ENCODE measurements at regions of chr2 and their contacts with region 1.

Region 1: GRCh38 chr2:71073475-71073874 is 5.0 kb downstream of the NAGK start:
- DNase-seq: no peak
- H3K4me3 ChIP-seq: no peak overlapping the region
- H3K27ac ChIP-seq: no peak overlapping the region
- H3K4me1 ChIP-seq: peaks cover 16% of the 10 kb centered on the region
- H3K27me3 ChIP-seq: no peaks in the 10 kb centered on the region
- CTCF ChIP-seq: no peak

Region 2: GRCh38 chr2:70509553-70509952 is 563.9 kb before region 1 on chr2:
- CTCF ChIA-PET with region 1: no interaction called
- POLR2A ChIA-PET with region 1: interaction called, 15 read pairs
- intact Hi-C with region 1: no loop called
- DNase-seq: peak; percentile 74 to 96
- H3K4me3 ChIP-seq: peak overlapping the region; percentile 35; the same call in 1 of the 2 replicates
- H3K27ac ChIP-seq: peak overlapping the region; percentile 97
- H3K4me1 ChIP-seq: peaks cover 43% of the 10 kb centered on the region
- H3K27me3 ChIP-seq: no peaks in the 10 kb centered on the region
- CTCF ChIP-seq: no peak